Naive thymus-derived CD4-positive, alpha-beta T cell (primary cell): ENCODE measurements at regions of chr5 and their contacts with region 1.

Region 1: GRCh38 chr5:126808521-126808988 is 31.6 kb downstream of the LMNB1 start:
- DNase-seq: peak in 5 of 9 donors; percentile 17 to 37 (median 22)
- ATAC-seq: peak; percentile 52
- H3K4me3 ChIP-seq: no peak overlapping the region
- H3K4me3 Mint-ChIP-seq: no peak overlapping the region
- H3K27ac ChIP-seq: no peak overlapping the region
- H3K27ac Mint-ChIP-seq: peak overlapping the region in 4 of 9 donors; percentile 10 to 95 (median 38)
- H3K4me1 ChIP-seq: peaks cover 8 to 11% of the 10 kb centered on the region in 2 donors
- H3K4me1 Mint-ChIP-seq: peaks cover 0 to 58% (median 24%) of the 10 kb centered on the region in 7 donors
- H3K27me3 ChIP-seq: no peaks in the 10 kb centered on the region
- H3K27me3 Mint-ChIP-seq: no peaks in the 10 kb centered on the region

Region 2: DNA sequence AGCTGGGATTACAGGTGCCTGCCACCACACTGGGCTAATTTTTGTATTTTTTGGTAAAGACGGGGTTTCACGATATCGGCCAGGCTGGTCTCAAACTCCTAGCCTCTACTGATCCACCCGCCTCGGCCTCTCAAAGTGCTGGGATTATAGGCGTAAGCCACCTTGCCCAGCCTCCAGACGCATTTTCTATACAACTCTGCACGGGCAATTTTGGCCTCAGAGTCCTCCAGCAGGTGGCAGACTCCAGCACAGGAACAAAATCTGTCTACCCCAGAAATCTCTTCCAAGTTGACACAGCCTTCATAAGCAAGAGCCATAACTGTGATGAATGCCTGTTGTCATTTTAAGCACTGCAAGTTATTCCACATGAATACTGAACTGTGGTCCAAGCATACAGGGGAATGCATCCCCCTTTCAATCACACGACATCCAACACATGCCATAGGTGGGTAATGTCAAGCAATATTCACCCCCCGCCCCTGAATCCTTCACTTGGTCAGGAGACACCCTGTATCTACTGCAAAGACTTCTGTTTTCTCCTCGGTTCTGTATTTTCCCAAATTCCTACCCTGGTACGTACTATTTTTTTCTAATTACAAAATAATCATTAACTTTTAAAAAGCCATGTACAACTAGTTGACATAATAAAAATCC is 264.3 kb before region 1 on chr5:
- CTCF ChIA-PET with region 1: no interaction called
- POLR2A ChIA-PET with region 1: no interaction called
- intact Hi-C with region 1: loop called in 1 of 2 experiments (anchors 10 kb)
- DNase-seq: peak in 5 of 9 donors; percentile 14 to 30 (median 28)
- ATAC-seq: peak; percentile 48
- H3K4me3 ChIP-seq: no peak overlapping the region
- H3K4me3 Mint-ChIP-seq: no peak overlapping the region
- H3K27ac ChIP-seq: no peak overlapping the region
- H3K27ac Mint-ChIP-seq: peak overlapping the region in 1 of 9 donors; percentile 12
- H3K4me1 ChIP-seq: no peaks in the 10 kb centered on the region
- H3K4me1 Mint-ChIP-seq: no peaks in the 10 kb centered on the region
- H3K27me3 ChIP-seq: no peaks in the 10 kb centered on the region
- H3K27me3 Mint-ChIP-seq: peaks cover 0 to 6% (median 0%) of the 10 kb centered on the region in 5 donors

Region 3: DNA sequence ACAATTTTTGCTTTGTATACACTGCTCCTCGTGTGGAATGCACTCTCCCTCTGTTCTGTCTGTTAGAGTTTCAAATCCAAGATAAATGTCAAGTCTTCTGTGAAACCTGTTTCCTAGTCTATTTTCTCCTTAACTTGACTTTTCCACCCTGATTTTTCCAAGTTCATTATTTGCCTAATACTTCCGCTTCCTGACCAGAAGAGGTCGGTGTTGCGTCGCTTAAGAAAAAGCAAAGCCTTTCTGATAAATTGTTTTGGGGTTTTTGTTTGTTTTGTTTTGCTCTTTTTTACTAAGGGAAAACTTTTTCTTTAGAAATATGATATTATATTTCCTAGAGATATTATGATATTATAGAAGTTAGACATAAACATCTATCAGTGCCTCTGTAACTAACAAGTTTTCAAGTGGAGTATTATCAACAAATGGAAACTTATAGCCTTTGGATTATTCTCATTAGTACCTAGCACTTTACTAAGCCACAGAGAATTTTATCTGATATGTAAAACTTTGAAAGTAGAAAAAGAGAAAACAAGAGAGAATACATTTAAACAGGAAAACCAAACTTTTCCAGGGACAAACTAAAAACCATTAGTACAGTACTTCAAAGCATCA is 152.1 kb before region 1 on chr5:
- CTCF ChIA-PET with region 1: interaction called, 3 read pairs
- POLR2A ChIA-PET with region 1: no interaction called
- intact Hi-C with region 1: loop called (anchors 1 to 2 kb)
- DNase-seq: peak in 5 of 9 donors; percentile 13 to 27 (median 24)
- ATAC-seq: no peak
- H3K4me3 ChIP-seq: no peak overlapping the region
- H3K4me3 Mint-ChIP-seq: no peak overlapping the region
- H3K27ac ChIP-seq: no peak overlapping the region
- H3K27ac Mint-ChIP-seq: no peak overlapping the region
- H3K4me1 ChIP-seq: no peaks in the 10 kb centered on the region
- H3K4me1 Mint-ChIP-seq: peaks cover 0 to 8% (median 0%) of the 10 kb centered on the region in 7 donors
- H3K27me3 ChIP-seq: no peaks in the 10 kb centered on the region
- H3K27me3 Mint-ChIP-seq: peaks cover 0 to 9% (median 0%) of the 10 kb centered on the region in 5 donors

Region 4: GRCh38 chr5:126745259-126745992 is 63.1 kb before region 1 on chr5:
- CTCF ChIA-PET with region 1: no interaction called
- POLR2A ChIA-PET with region 1: no interaction called
- intact Hi-C with region 1: loop called in 1 of 2 experiments (anchors 1 kb)
- DNase-seq: no peak
- ATAC-seq: no peak
- H3K4me3 ChIP-seq: no peak overlapping the region
- H3K4me3 Mint-ChIP-seq: no peak overlapping the region
- H3K27ac ChIP-seq: no peak overlapping the region
- H3K27ac Mint-ChIP-seq: peak overlapping the region in 1 of 9 donors; percentile 26
- H3K4me1 ChIP-seq: peaks cover 4 to 13% of the 10 kb centered on the region in 2 donors
- H3K4me1 Mint-ChIP-seq: peaks cover 11 to 30% (median 19%) of the 10 kb centered on the region in 7 donors
- H3K27me3 ChIP-seq: no peaks in the 10 kb centered on the region
- H3K27me3 Mint-ChIP-seq: peaks cover 0 to 4% (median 0%) of the 10 kb centered on the region in 5 donors

Region 5: DNA sequence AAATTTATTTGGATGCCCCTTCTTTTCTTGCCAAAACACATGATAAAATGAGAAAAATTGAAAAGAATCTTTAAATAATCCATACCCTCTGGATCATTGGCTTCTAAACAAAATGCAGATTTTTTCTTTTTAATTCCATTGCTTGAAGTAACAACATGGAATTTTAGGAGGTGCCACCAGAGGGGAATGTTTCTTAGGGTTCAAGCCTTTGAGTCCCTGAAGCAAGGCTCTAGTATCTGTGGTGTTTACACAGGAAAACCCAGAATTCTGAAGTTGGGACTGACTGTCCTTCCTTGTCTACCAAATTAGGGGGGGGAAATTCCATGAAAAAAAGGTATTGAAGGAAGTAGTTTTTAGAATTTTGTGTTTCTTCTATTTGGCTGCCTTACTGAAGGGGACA is 37.8 kb after region 1 on chr5:
- CTCF ChIA-PET with region 1: no interaction called
- POLR2A ChIA-PET with region 1: interaction called, 5 read pairs
- intact Hi-C with region 1: loop called (anchors 1 to 5 kb)
- DNase-seq: no peak
- ATAC-seq: no peak
- H3K4me3 ChIP-seq: peak overlapping the region; percentile 27
- H3K4me3 Mint-ChIP-seq: peak overlapping the region in 7 of 10 donors; percentile 42 to 73 (median 59)
- H3K27ac ChIP-seq: peak overlapping the region; percentile 66
- H3K27ac Mint-ChIP-seq: peak overlapping the region; percentile 27 to 98 (median 94)
- H3K4me1 ChIP-seq: peaks cover 3 to 23% of the 10 kb centered on the region in 2 donors
- H3K4me1 Mint-ChIP-seq: peaks cover 18 to 61% (median 51%) of the 10 kb centered on the region in 7 donors
- H3K27me3 ChIP-seq: no peaks in the 10 kb centered on the region
- H3K27me3 Mint-ChIP-seq: no peaks in the 10 kb centered on the region